ENCODE measurements at regions of chr10 and their contacts with region 1.

Region 1: DNA sequence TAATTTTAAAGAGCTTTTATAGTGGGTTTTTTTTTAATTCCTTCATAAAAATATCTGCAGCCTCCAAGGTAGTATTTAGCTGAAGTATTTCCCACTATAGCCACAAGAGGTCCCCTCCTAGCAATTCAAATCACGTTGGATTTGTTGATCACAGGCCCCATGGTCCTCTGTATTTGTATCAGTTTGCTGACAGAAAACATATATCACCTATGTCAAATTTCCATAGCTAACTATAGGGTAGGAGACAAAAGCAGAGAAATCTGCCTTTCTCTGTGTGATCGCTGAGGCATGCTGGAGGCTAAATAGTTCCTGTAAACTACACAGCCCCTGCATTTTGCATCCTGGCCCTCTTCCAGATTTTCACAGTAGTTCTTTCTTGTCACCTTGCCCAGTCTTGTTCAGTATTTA is 1.7 kb upstream of the CTNNA3 start:
- DNase-seq: no peak
- ATAC-seq: peak; percentile 91 to 94 (median 93)
- H3K4me3 ChIP-seq: no peak overlapping the region
- H3K27ac ChIP-seq: no peak overlapping the region
- H3K4me1 ChIP-seq: no peaks in the 10 kb centered on the region
- H3K27me3 ChIP-seq: no peaks in the 10 kb centered on the region
- CTCF ChIP-seq: peak; percentile 64 to 72 (median 70)
- POLR2A ChIP-seq: no peak

Region 2: DNA sequence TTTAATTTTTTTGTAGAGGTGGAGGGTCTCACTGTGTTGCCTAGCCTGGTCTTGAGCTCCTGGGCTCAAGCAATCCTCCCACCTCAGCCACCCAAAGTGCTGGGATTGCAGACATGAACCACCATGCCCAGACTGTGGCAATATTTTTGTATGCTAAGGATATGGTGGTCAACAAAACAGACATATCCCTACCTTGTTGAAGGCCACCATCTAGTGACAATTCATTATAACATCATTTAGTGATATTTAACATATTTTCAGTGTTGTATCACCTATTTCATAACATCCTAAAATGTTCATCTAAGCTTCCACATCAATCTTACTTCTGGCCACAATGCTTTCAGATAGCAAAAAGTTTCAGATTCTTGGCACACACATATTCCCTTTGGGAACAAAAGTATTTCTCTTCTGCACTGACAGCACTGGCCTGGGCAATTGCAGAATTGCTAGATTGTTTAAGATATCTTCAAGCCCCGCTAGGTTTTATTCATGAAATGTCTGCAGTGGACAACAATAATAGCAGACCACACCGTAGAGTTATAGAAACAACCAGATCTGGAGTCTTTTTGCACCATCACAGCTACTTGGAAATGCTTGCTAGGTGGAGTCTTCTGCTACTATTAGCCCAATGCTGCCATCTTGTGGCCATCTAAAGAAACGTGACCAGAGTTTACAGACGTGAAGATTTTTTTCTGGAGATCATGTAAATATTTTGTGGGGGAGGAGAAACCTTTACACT is 81.9 kb after region 1 on chr10:
- intact Hi-C with region 1: loop called (anchors 5 to 10 kb)
- DNase-seq: peak in 1 of 3 donors; percentile 68
- ATAC-seq: peak; percentile 88 to 93 (median 92)
- H3K4me3 ChIP-seq: no peak overlapping the region
- H3K27ac ChIP-seq: no peak overlapping the region
- H3K4me1 ChIP-seq: no peaks in the 10 kb centered on the region
- H3K27me3 ChIP-seq: no peaks in the 10 kb centered on the region
- CTCF ChIP-seq: peak; percentile 73 to 85 (median 82)
- POLR2A ChIP-seq: no peak

Measured in right lobe of liver (tissue), 6 donors.